Gastrocnemius medialis (tissue), 4 donors: ENCODE measurements at regions of chr1 and their contacts with region 1.

Region 1: DNA sequence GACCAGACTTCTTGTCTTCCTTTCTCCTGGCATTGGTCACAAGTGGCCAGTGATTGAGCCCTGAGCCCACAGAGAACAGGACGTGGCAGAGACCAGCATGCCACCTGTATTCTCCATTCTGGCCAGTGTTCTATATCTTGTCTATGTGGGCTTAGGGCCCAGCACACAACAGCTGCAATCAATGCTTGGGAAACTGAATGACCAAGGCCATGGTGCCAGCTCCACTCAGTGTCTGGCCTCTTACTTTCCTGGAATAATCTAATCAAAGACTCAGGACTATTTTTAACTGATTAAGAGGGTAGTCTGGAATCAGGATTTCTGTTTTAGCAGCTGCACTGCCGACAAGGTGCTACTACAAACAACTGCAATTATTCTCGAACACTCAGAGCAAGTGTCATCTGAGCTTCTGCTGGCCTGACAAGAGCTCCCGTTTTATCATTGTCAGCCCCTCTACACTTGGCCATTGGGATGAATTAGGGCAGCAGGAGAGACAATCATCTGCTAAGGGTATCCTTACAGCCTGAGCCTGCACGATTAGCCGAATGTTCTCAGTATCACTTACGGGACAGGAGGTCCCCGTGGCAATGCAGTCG is 74.4 kb upstream of the GRIK3 start:
- DNase-seq: peak; percentile 40 to 70
- ATAC-seq: peak; percentile 64 to 71
- H3K4me3 ChIP-seq: no peak overlapping the region
- H3K27ac ChIP-seq: peak overlapping the region; percentile 63 to 83 (median 74)
- H3K4me1 ChIP-seq: peaks cover 0 to 52% of the 10 kb centered on the region in 2 donors
- H3K27me3 ChIP-seq: no peaks in the 10 kb centered on the region
- CTCF ChIP-seq: no peak
- POLR2A ChIP-seq: no peak

Region 2: DNA sequence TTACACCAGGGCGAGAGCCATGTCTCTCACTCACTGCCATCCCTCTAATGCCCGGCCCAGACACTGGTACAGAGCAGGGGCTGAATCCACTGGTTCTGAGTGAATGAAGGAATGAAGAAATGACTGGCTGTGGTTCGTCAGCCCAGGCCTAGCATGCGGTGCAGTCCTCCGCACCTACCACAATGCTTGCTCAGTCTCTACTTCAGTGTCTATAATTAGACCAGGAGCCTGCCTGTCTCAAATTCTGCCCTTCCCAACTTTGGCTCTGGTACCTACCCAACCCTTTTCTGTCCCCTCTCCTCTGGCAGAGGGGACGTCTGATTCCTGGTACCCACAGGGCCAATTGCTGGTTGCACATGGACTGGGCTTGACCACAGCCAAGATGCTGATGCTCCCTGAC is 43.8 kb after region 1 on chr1:
- in situ Hi-C with region 1: no loop called
- intact Hi-C with region 1: loop called (anchors 2 kb)
- DNase-seq: peak; percentile 50 to 86
- ATAC-seq: peak; percentile 78 to 81
- H3K4me3 ChIP-seq: peak overlapping the region in 3 of 4 donors; percentile 17 to 58 (median 47)
- H3K27ac ChIP-seq: peak overlapping the region; percentile 66 to 93 (median 84)
- H3K4me1 ChIP-seq: peaks cover 0 to 66% of the 10 kb centered on the region in 2 donors
- H3K27me3 ChIP-seq: peaks cover 0 to 3% (median 0%) of the 10 kb centered on the region in 3 donors
- CTCF ChIP-seq: no peak
- POLR2A ChIP-seq: peak; percentile 38 to 70